Right ventricle myocardium inferior (tissue), 1 donor: ENCODE measurements at regions of chr3 and their contacts with region 1.

Region 1: GRCh38 chr3:174198199-174198598 is 660.9 kb upstream of the NAALADL2 start:
- DNase-seq: no peak
- ATAC-seq: no peak

Region 2: DNA sequence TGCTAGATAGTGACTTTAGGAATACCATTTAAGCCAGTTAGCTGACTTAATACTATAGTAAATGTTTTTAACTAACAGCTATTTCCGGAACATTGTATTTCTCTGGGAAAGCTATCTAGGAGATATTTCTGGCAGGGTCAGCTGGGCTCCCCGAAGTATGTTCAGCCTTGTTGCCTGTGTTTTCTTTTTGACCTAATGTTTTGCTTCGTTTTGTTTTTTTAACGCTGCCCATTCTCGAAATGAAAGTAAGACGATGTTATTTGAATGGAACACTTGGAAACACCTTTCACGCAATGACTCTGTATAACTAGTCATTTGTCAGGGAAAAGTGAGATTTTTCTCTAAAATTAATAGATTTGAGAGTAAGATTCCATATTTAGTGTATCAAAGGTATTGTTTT is 42.0 kb before region 1 on chr3:
- intact Hi-C with region 1: loop called (anchors 5 kb)
- DNase-seq: no peak
- ATAC-seq: no peak